Activated CD4-positive, alpha-beta memory T cell treated with anti-CD3 and anti-CD28 coated beads, Interleukin-2, amount 10 ng/mL, durations not matched to agents 7 days and 5 days (primary cell): ENCODE measurements at regions of chr16 and their contacts with region 1.

Region 1: GRCh38 chr16:3023669-3024478 is at the starts of genes HCFC1R1 and THOC6:
- DNase-seq: peak; percentile 97
- H3K4me3 Mint-ChIP-seq: peak within 1 kb of the TSS; percentile 73
- H3K27ac Mint-ChIP-seq: peak within 1 kb of the TSS; percentile 83
- H3K4me1 Mint-ChIP-seq: peaks cover 58% of the 10 kb centered on the region
- H3K27me3 Mint-ChIP-seq: peaks cover 5% of the 10 kb centered on the region
- total RNA-seq, gene HCFC1R1: 37.0 to 43.3 TPM
- total RNA-seq, gene THOC6: 42.4 TPM

Region 2: GRCh38 chr16:2752035-2752849 is 271.6 kb before region 1 on chr16 and contains the start of gene SRRM2:
- CTCF ChIA-PET with region 1: no interaction called
- POLR2A ChIA-PET with region 1: no interaction called
- DNase-seq: peak; percentile 96
- H3K4me3 Mint-ChIP-seq: peak within 1 kb of the TSS; percentile 81
- H3K27ac Mint-ChIP-seq: peak within 1 kb of the TSS; percentile 99
- H3K4me1 Mint-ChIP-seq: peaks cover 59% of the 10 kb centered on the region
- H3K27me3 Mint-ChIP-seq: no peaks in the 10 kb centered on the region
- total RNA-seq, gene SRRM2: 520 to 539 TPM

Region 3: DNA sequence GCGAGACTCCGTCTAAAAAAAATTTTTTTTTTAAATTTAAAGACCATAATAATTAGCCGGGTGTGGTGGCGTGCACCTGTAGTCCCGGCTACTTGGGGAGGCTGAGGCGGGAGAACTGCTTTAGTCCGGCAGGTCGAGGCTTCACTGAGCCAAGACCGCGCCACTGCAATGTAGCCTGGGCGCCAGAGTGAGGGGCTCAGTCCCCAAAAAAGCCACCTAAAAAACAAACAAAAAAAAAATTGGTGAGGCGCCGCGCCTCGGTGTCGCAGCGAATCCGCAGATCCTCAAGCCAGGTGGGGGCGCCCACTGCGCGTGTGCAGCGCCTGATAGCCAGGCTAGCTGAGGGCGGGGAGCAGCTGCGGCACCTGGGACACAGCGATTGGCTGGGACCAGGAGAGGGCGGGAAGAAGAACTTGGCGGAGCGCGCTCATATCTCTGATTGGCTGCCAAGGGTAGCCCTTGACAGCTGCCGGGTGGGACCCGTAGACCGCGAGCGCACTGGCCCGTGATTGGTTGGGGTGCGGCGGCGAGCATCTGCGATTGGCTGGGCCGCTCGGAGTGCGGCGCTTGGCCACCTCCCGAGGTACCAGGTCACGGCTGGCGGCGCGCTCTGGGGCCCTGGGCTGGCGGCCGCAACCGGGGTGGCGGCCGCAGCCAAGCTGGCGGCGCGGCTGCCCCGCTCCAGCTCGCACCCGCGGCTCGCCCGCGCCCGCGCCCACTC is 20.1 kb before region 1 on chr16:
- CTCF ChIA-PET with region 1: interaction called, 209 read pairs
- POLR2A ChIA-PET with region 1: interaction called, 52 read pairs
- DNase-seq: peak; percentile 98
- H3K4me3 Mint-ChIP-seq: peak overlapping the region; percentile 72
- H3K27ac Mint-ChIP-seq: peak overlapping the region; percentile 16
- H3K4me1 Mint-ChIP-seq: peaks cover 33% of the 10 kb centered on the region
- H3K27me3 Mint-ChIP-seq: peaks cover 18% of the 10 kb centered on the region

Region 4: DNA sequence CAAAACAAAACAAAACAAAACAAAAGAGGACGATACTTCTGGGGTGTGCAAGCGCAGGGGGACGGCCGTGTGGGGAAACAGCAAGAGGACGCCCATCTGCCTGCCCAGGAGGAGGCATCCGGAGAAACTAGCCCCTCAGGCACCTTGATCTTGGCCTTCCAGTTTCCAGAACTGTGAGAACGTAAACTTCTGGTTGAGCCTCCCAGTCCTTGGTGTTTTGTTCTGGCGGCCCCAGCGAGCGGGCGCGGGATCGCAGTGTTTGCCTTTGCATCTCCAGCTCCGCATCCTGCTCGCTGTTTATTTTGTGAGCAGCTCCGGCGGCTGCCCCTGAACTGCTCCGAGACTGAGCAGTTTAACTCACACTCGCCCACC is 21.5 kb after region 1 on chr16:
- CTCF ChIA-PET with region 1: interaction called, 38 read pairs
- POLR2A ChIA-PET with region 1: interaction called, 72 read pairs
- DNase-seq: peak; percentile 61
- H3K4me3 Mint-ChIP-seq: peak overlapping the region; percentile 85
- H3K27ac Mint-ChIP-seq: peak overlapping the region; percentile 78
- H3K4me1 Mint-ChIP-seq: peaks cover 51% of the 10 kb centered on the region
- H3K27me3 Mint-ChIP-seq: peaks cover 24% of the 10 kb centered on the region

Region 5: DNA sequence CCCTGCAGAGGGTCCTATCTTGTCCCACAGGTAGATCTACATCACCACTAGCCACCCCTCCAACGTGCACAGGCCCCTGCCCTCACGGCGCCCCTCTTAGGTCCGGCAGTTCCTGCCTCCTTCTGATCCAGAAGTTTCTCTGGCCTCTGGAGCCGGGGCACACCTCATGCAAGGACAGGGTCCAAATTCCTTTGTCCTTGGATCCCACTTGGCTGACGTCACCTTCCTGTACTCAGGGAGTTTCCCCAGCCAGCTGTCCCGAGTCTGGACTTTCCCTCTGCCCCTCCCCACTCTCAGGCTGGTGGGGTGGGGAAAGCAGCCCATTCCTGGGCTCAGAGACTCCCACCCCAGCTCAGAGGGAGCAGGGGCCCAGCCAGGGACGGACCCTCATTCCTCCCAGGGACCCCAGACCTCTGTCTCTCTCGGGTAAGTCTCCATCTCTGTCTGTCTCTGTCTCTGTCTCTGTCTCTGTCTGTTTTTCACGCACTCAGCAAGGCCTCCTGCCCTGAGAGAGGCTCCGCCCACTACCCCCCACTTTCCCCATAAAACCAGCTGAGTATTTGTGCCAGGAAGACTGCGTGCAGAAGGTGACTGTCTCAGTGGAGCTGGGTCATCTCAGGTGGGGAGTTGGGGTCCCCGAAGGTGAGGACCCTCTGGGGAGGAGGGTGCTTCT is 41.3 kb after region 1 on chr16 and contains the start of gene IL32:
- CTCF ChIA-PET with region 1: interaction called, 21 read pairs
- POLR2A ChIA-PET with region 1: interaction called, 13 read pairs
- DNase-seq: peak; percentile 80
- H3K4me3 Mint-ChIP-seq: peak within 1 kb of the TSS; percentile 100
- H3K27ac Mint-ChIP-seq: peak within 1 kb of the TSS; percentile 99
- H3K4me1 Mint-ChIP-seq: peaks cover 68% of the 10 kb centered on the region
- H3K27me3 Mint-ChIP-seq: no peaks in the 10 kb centered on the region
- total RNA-seq, gene IL32: 4,131 to 4,213 TPM

Region 6: DNA sequence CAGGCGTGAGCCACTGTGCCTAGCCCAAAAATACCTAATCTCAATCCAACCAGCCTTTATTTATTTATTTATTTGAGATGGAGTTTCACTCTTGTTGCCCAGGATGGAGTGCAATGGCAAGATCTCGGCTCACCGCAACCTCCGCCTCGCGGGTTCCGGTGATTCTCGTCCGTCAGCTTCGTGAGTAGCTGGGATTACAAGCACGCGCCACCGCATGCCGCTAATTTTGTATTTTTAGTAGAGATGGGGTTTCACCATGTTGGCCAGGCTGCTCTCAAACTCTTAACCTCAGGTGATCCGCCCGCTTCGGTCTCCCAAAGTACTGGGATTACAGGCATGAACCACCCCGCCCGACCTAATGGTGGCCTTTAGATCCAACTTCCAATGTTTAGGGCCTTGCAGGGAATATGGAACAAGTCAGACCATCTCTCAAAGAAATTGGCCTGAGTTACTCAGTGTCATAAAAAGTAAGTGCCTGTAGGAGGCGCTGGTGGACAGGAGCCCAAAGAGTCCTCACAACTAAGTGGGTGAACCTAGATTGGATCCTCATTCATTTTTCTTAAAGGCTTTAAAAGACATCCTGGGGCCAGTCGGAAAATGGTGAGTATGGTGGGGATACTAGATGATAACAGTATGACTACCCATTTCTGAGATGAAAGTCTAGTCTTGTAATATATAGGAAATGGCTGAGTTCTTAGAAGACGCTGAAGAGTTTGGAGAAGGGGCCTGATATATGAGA is 70.6 kb after region 1 on chr16:
- CTCF ChIA-PET with region 1: interaction called, 10 read pairs
- POLR2A ChIA-PET with region 1: no interaction called
- DNase-seq: peak; percentile 68
- H3K4me3 Mint-ChIP-seq: peak overlapping the region; percentile 1
- H3K27ac Mint-ChIP-seq: peak overlapping the region; percentile 37
- H3K4me1 Mint-ChIP-seq: peaks cover 46% of the 10 kb centered on the region
- H3K27me3 Mint-ChIP-seq: no peaks in the 10 kb centered on the region

Region 7: DNA sequence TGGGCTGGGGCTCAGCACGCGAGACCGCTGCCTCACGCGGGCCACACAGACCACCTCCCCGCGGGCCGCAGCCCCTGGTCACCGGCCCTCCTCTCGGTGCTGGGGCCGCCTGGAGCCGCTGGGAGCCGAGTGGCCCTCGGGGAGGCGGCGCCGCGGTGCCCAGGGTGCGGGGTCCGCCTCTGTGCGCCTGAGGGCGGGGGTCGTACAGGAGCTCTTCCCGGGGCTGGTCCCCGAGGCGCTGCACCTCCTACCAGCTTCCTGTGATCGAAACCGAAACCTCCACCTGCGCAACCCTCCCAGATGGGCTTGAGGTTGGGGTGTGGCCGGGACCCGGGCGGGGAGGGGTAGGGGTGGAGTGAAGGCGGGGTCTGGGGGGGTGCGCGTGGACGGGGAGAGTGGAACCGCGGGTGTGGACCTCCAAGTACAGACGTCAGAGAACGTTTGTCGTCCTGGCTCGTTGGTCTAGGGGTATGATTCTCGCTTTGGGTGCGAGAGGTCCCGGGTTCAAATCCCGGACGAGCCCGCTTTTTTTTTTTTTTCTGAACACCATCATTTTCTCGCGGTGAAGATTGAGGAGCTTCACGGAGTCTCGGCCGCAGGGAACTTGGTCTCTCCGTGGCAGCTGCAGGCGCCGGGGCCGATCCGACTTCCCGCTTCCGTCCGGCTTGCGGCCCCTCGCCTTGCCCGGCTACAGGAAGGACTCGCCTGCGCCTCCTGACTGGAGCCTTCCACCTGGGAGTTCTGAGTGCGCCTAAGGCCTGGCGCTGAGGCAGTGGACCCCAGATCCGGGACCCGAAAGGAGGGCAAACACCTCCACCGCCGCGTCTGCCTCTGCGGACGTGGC is 134.8 kb after region 1 on chr16:
- CTCF ChIA-PET with region 1: interaction called, 3 read pairs
- POLR2A ChIA-PET with region 1: interaction called, 11 read pairs
- DNase-seq: peak; percentile 96
- H3K4me3 Mint-ChIP-seq: peak overlapping the region; percentile 91
- H3K27ac Mint-ChIP-seq: peak overlapping the region; percentile 95
- H3K4me1 Mint-ChIP-seq: peaks cover 44% of the 10 kb centered on the region
- H3K27me3 Mint-ChIP-seq: peaks cover 23% of the 10 kb centered on the region